AG04450 (cell line): ENCODE measurements at regions of chr12 and their contacts with region 1.

Region 1: DNA sequence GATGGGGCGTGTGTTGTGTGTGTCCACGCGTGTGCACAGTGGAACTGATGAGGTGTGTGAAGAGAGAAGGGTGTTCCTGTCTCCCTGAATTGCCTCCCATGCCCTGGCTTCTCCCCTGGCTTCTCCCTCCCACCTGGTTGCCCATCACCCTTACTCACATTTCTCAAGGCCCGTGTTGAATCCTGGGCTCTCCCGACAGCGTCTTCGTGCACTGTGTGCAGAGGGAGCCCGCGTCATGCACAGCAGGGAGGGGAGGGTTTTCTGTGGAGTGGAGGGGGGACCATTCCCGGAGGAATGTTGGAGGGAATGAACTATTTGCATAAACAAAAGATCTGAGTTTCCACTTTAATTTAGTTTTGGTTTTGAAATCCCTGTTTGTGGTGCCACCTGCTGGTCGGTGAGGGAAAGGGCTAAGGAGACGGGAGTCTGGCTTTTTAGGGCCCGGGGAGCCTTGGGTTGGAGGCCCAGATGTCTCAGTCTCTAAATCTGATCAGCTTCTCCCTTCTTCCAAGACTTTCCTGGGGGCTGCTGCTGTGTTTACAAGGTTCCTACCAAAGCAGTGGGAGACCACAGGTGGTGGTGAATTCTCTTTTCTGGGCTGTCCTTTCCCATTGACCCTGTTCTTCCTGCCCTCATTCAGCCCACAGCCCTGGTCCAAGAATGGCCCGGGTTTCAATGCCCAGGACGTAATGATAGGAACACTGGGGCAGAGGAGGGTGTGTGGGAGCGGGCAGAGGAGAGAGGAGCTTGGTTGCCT is at the start of gene C1R:
- DNase-seq: peak; percentile 85
- H3K4me3 ChIP-seq: peak within 1 kb of the TSS; percentile 86
- H3K27ac ChIP-seq: peak within 1 kb of the TSS; percentile 62
- H3K27me3 ChIP-seq: no peaks in the 10 kb centered on the region
- CTCF ChIP-seq: peak; percentile 90
- polyA plus RNA-seq, gene C1R: 617 and 795 TPM in 2 replicates

Region 2: GRCh38 chr12:7060353-7060954 is 32.0 kb before region 1 on chr12 and contains the start of gene C1S:
- CTCF ChIA-PET with region 1: interaction called, 18 read pairs
- POLR2A ChIA-PET with region 1: no interaction called
- DNase-seq: peak; percentile 97
- H3K4me3 ChIP-seq: peak within 1 kb of the TSS; percentile 69
- H3K27ac ChIP-seq: peak within 1 kb of the TSS; percentile 94
- H3K27me3 ChIP-seq: peaks cover 3% of the 10 kb centered on the region
- CTCF ChIP-seq: peak; percentile 92
- polyA plus RNA-seq, gene C1S: 406 and 458 TPM in 2 replicates

Region 3: GRCh38 chr12:7068240-7068993 is 24.0 kb before region 1 on chr12:
- CTCF ChIA-PET with region 1: interaction called, 3 read pairs
- POLR2A ChIA-PET with region 1: interaction called, 10 read pairs
- DNase-seq: no peak
- H3K4me3 ChIP-seq: no peak overlapping the region
- H3K27ac ChIP-seq: no peak overlapping the region
- H3K27me3 ChIP-seq: no peaks in the 10 kb centered on the region
- CTCF ChIP-seq: no peak

Region 4: GRCh38 chr12:7079826-7080125 is 12.6 kb before region 1 on chr12:
- CTCF ChIA-PET with region 1: interaction called, 4 read pairs
- POLR2A ChIA-PET with region 1: interaction called, 10 read pairs
- DNase-seq: peak; percentile 23
- H3K4me3 ChIP-seq: no peak overlapping the region
- H3K27ac ChIP-seq: peak overlapping the region; percentile 88
- H3K27me3 ChIP-seq: no peaks in the 10 kb centered on the region
- CTCF ChIP-seq: no peak

Region 5: GRCh38 chr12:7108796-7109571 is 16.6 kb after region 1 on chr12 and contains the start of gene C1RL:
- CTCF ChIA-PET with region 1: interaction called, 21 read pairs
- POLR2A ChIA-PET with region 1: interaction called, 4 read pairs
- DNase-seq: no peak
- H3K4me3 ChIP-seq: peak within 1 kb of the TSS; percentile 82
- H3K27ac ChIP-seq: peak within 1 kb of the TSS; percentile 96
- H3K27me3 ChIP-seq: no peaks in the 10 kb centered on the region
- CTCF ChIP-seq: peak; percentile 97
- polyA plus RNA-seq, gene C1RL: 45.3 and 58.7 TPM in 2 replicates